Activated CD4-positive, alpha-beta T cell treated with anti-CD3 and anti-CD28 coated beads, Interleukin-2, amount 10 ng/mL, durations not matched to agents 24 days and 14 days (primary cell): ENCODE measurements at regions of chr6 and their contacts with region 1.

Region 1: DNA sequence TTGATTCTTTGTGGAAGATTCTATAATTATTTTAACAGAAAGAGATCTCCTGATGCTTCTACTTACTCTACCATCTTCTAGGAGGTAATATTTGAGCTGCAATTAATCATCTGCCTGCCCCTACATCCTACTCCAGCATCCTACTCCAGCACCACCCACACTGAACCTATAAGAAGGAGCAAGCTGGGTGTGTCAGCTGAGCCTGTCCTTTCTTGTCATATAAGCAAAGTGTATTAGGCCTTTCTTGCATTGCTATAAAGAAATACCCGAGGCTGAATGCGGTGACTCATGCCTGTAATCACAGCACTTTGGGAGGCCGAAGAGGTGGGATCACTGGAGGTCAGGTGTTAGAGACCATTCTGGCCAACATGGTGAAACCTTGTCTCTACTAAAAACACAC is 84.2 kb upstream of the ARG1 start:
- DNase-seq: no peak
- H3K4me3 Mint-ChIP-seq: no peak overlapping the region
- H3K27ac Mint-ChIP-seq: no peak overlapping the region
- H3K4me1 Mint-ChIP-seq: no peaks in the 10 kb centered on the region
- H3K27me3 Mint-ChIP-seq: no peaks in the 10 kb centered on the region

Region 2: GRCh38 chr6:131295081-131295480 is 193.7 kb before region 1 on chr6:
- intact Hi-C with region 1: loop called (anchors 5 kb)
- DNase-seq: no peak
- H3K4me3 Mint-ChIP-seq: no peak overlapping the region
- H3K27ac Mint-ChIP-seq: no peak overlapping the region
- H3K4me1 Mint-ChIP-seq: peaks cover 8% of the 10 kb centered on the region
- H3K27me3 Mint-ChIP-seq: no peaks in the 10 kb centered on the region